ENCODE measurements at regions of chr10 and their contacts with region 1.

Region 1: GRCh38 chr10:112721080-112721698 is 228.9 kb upstream of the TCF7L2 start:
- DNase-seq: peak; percentile 31
- ATAC-seq: no peak
- H3K4me3 ChIP-seq: no peak overlapping the region
- H3K27ac ChIP-seq: no peak overlapping the region
- H3K4me1 ChIP-seq: peaks cover 66% of the 10 kb centered on the region
- H3K27me3 ChIP-seq: no peaks in the 10 kb centered on the region
- CTCF ChIP-seq: peak; percentile 56
- EP300 ChIP-seq: no peak
- POLR2A ChIP-seq: no peak
- RAD21 ChIP-seq: 0 out of 2 replicates have a peak, but pooled peaks have one; percentile 26

Region 2: GRCh38 chr10:112446855-112447711 is 274.1 kb before region 1 on chr10 and contains the starts of genes VTI1A and ZDHHC6:
- CTCF ChIA-PET with region 1: no interaction called
- POLR2A ChIA-PET with region 1: no interaction called
- in situ Hi-C with region 1: no loop called
- intact Hi-C with region 1: no loop called
- DNase-seq: peak; percentile 81
- ATAC-seq: peak; percentile 99
- H3K4me3 ChIP-seq: peak within 1 kb of the TSS; percentile 92 to 96 (median 96)
- H3K27ac ChIP-seq: peak within 1 kb of the TSS; percentile 94
- H3K4me1 ChIP-seq: peaks cover 32% of the 10 kb centered on the region
- H3K27me3 ChIP-seq: no peaks in the 10 kb centered on the region; a peak in 1 of 5 replicates
- CTCF ChIP-seq: peak; percentile 60
- EP300 ChIP-seq: 0 out of 4 replicates have a peak, but pooled peaks of 1 of the 2 experiments have one; percentile 8
- POLR2A ChIP-seq: peak; percentile 81 to 91
- RAD21 ChIP-seq: no peak; the same call in 1 of the 2 replicates
- total RNA-seq, gene VTI1A: 32.7 and 38.7 TPM in 2 replicates
- total RNA-seq, gene ZDHHC6: 49.4 and 50.9 TPM in 2 replicates

Region 3: DNA sequence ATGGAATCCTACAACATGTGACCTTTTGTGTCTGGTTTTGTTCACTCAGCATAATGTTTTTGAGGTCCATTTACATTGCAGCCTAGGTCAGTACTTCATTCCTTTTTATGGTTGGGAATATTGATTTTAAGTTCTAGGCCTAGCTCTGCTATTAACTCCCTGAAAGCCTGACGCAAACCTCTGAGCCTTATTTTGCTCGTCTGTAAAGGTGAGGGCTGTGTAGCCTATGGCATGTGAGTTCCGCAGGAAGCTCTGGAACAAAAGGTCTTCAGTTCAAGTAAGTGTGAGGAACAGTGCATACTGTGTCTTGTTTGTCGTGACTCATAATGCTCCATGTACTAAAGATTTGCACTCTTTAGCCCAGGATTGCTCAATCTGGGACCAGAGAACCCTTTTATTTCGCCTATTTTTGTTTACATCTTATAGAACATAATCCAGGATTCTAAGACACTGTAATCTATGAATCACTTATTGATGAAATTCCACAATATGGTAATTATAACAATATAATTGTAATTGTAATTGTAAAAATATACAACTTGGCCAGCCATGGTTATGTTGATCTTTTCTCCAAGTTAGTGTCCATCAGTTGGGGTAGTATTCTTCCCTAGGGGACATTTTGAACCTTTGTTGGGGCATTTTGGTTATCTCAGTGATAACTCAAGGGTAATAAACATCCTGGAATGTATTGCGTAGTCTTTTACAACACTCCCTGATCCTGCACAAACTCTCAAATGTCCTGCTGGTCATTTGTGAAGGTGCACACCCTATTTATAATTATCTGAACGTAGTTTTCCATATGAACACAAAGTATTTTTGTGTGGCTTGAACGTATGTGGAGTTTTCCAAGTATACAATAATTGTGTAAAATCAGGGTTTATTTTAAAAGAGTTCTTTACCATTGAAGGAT is 89.4 kb before region 1 on chr10:
- CTCF ChIA-PET with region 1: no interaction called
- POLR2A ChIA-PET with region 1: interaction called, 3 read pairs
- in situ Hi-C with region 1: no loop called
- intact Hi-C with region 1: loop called (anchors 10 kb)
- DNase-seq: peak; percentile 98
- ATAC-seq: peak; percentile 99
- H3K4me3 ChIP-seq: no peak overlapping the region; a peak in 1 of 6 replicates
- H3K27ac ChIP-seq: peak overlapping the region; percentile 83
- H3K4me1 ChIP-seq: peaks cover 59% of the 10 kb centered on the region
- H3K27me3 ChIP-seq: no peaks in the 10 kb centered on the region
- CTCF ChIP-seq: no peak
- EP300 ChIP-seq: peak in 1 of 2 experiments; percentile 89; a peak in 2 of 4 replicates
- POLR2A ChIP-seq: no peak
- RAD21 ChIP-seq: no peak

Region 4: DNA sequence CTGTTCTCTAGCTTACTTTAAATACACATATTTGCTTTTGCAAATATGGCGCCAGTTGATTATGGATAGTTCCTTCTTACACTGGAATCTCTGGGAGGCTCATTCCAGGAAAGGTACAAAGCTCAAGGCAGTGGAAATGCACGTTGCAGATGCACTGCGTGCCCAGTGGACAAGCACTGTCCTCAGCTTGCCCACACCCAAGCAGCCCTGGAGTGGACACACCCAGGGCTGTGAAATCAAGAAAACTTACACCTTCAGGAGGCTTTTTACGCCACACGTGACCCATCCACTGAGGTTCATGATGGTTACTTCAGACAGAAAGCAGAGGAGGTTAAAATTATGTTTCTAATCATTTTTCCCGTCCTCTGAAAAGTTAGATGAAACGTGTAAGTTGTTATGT is 25.6 kb before region 1 on chr10:
- CTCF ChIA-PET with region 1: no interaction called
- POLR2A ChIA-PET with region 1: interaction called, 13 read pairs
- in situ Hi-C with region 1: no loop called
- intact Hi-C with region 1: no loop called
- DNase-seq: peak; percentile 90
- ATAC-seq: peak; percentile 99
- H3K4me3 ChIP-seq: peak overlapping the region in 1 of 3 experiments; percentile 21; a peak in 1 of 6 replicates
- H3K27ac ChIP-seq: peak overlapping the region; percentile 73
- H3K4me1 ChIP-seq: peaks cover 35% of the 10 kb centered on the region
- H3K27me3 ChIP-seq: no peaks in the 10 kb centered on the region
- CTCF ChIP-seq: peak; percentile 25; the same call in 1 of the 2 replicates
- EP300 ChIP-seq: peak in 1 of 2 experiments; percentile 87; a peak in 2 of 4 replicates
- POLR2A ChIP-seq: peak in 1 of 2 experiments; percentile 36; a peak in 1 of 4 replicates
- RAD21 ChIP-seq: peak; percentile 50

Region 5: GRCh38 chr10:112741830-112742411 is 20.7 kb after region 1 on chr10:
- CTCF ChIA-PET with region 1: no interaction called
- POLR2A ChIA-PET with region 1: interaction called, 15 read pairs
- in situ Hi-C with region 1: no loop called
- intact Hi-C with region 1: no loop called
- DNase-seq: peak; percentile 76
- ATAC-seq: no peak
- H3K4me3 ChIP-seq: no peak overlapping the region
- H3K27ac ChIP-seq: peak overlapping the region; percentile 92
- H3K4me1 ChIP-seq: peaks cover 86% of the 10 kb centered on the region
- H3K27me3 ChIP-seq: no peaks in the 10 kb centered on the region
- CTCF ChIP-seq: no peak
- EP300 ChIP-seq: peak in 1 of 2 experiments; percentile 87; a peak in 2 of 4 replicates
- POLR2A ChIP-seq: no peak
- RAD21 ChIP-seq: no peak

Region 6: GRCh38 chr10:112811740-112812551 is 90.8 kb after region 1 on chr10:
- CTCF ChIA-PET with region 1: no interaction called
- POLR2A ChIA-PET with region 1: interaction called, 3 read pairs
- in situ Hi-C with region 1: no loop called
- intact Hi-C with region 1: loop called (anchors 5 kb)
- DNase-seq: peak; percentile 95
- ATAC-seq: peak; percentile 92
- H3K4me3 ChIP-seq: no peak overlapping the region
- H3K27ac ChIP-seq: no peak overlapping the region
- H3K4me1 ChIP-seq: peaks cover 54% of the 10 kb centered on the region
- H3K27me3 ChIP-seq: no peaks in the 10 kb centered on the region
- CTCF ChIP-seq: no peak
- EP300 ChIP-seq: peak in 1 of 2 experiments; percentile 91; a peak in 2 of 4 replicates
- POLR2A ChIP-seq: no peak
- RAD21 ChIP-seq: no peak; the same call in none of the 2 replicates

Region 7: GRCh38 chr10:112967200-112967599 is 246.0 kb after region 1 on chr10:
- CTCF ChIA-PET with region 1: no interaction called
- POLR2A ChIA-PET with region 1: no interaction called
- in situ Hi-C with region 1: no loop called
- intact Hi-C with region 1: no loop called
- DNase-seq: no peak
- ATAC-seq: no peak
- H3K4me3 ChIP-seq: no peak overlapping the region
- H3K27ac ChIP-seq: no peak overlapping the region
- H3K4me1 ChIP-seq: peaks cover 61% of the 10 kb centered on the region
- H3K27me3 ChIP-seq: no peaks in the 10 kb centered on the region
- CTCF ChIP-seq: no peak
- EP300 ChIP-seq: no peak
- POLR2A ChIP-seq: no peak
- RAD21 ChIP-seq: no peak

Measured in HepG2 (cell line).